Stomach (tissue), 19 donors: ENCODE measurements at regions of chr20 and their contacts with region 1.

Region 1: GRCh38 chr20:1876975-1877608 is 18.1 kb upstream of the SIRPA start:
- DNase-seq: peak in 1 of 2 donors; percentile 75
- H3K4me3 ChIP-seq: no peak overlapping the region
- H3K27ac ChIP-seq: no peak overlapping the region
- H3K4me1 ChIP-seq: peaks cover 5 to 44% (median 14%) of the 10 kb centered on the region in 4 donors
- H3K27me3 ChIP-seq: peaks cover 0 to 28% (median 0%) of the 10 kb centered on the region in 3 donors
- CTCF ChIP-seq: no peak
- EP300 ChIP-seq: no peak
- POLR2A ChIP-seq: no peak

Region 2: GRCh38 chr20:1790386-1790785 is 86.7 kb before region 1 on chr20:
- intact Hi-C with region 1: loop called (anchors 10 kb)
- DNase-seq: no peak
- H3K4me3 ChIP-seq: no peak overlapping the region
- H3K27ac ChIP-seq: no peak overlapping the region
- H3K4me1 ChIP-seq: no peaks in the 10 kb centered on the region
- H3K27me3 ChIP-seq: peaks cover 0 to 72% (median 11%) of the 10 kb centered on the region in 3 donors
- CTCF ChIP-seq: no peak
- EP300 ChIP-seq: no peak
- POLR2A ChIP-seq: no peak

Region 3: GRCh38 chr20:1964061-1964460 is 87.0 kb after region 1 on chr20:
- intact Hi-C with region 1: no loop called
- DNase-seq: no peak
- H3K4me3 ChIP-seq: no peak overlapping the region
- H3K27ac ChIP-seq: no peak overlapping the region
- H3K4me1 ChIP-seq: peaks cover 0 to 14% (median 8%) of the 10 kb centered on the region in 4 donors
- H3K27me3 ChIP-seq: peaks cover 0 to 37% (median 0%) of the 10 kb centered on the region in 3 donors
- CTCF ChIP-seq: no peak
- EP300 ChIP-seq: no peak
- POLR2A ChIP-seq: no peak